Activated CD4-positive, alpha-beta T cell treated with anti-CD3 and anti-CD28 coated beads for 36 hours (primary cell): ENCODE measurements at regions of chr3 and their contacts with region 1.

Region 1: DNA sequence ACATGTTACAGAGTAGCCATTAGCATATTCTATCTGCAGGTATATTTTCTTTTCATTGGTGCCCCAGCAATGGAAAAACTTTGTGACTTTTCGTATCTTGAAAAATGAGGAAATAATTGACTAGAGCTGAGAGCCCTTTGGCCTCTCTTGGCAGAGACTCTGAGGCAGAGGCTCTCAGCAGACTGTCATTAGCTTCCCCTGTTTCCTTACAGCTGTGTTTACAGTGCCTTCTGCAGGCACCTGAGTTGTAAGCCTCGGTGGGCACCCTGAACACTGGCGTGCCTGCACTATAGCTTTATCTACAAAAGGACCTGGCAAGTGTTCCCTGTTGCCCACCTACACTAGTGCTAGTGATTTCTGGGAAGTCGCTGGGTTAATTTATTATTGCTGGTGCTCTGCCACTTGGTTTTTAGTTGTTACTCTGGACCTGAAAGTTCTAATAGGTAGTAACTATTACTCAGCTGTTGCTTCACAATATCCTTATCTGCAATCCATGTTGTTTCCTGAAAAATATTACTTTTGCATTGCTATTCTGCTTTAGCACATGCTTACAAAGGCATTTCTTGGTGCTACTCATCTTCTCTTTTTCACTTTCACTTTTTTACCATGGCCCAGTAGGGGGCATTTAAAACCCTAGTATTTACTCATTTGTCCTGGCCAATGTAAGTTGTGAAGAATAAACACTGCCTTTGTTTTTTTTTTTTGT is 7.8 kb upstream of the GPR171 start:
- DNase-seq: peak; percentile 20
- ATAC-seq: peak; percentile 38
- H3K4me3 Mint-ChIP-seq: peak overlapping the region; percentile 41
- H3K27ac Mint-ChIP-seq: peak overlapping the region; percentile 89
- H3K4me1 Mint-ChIP-seq: peaks cover 58% of the 10 kb centered on the region
- H3K27me3 Mint-ChIP-seq: no peaks in the 10 kb centered on the region

Region 2: DNA sequence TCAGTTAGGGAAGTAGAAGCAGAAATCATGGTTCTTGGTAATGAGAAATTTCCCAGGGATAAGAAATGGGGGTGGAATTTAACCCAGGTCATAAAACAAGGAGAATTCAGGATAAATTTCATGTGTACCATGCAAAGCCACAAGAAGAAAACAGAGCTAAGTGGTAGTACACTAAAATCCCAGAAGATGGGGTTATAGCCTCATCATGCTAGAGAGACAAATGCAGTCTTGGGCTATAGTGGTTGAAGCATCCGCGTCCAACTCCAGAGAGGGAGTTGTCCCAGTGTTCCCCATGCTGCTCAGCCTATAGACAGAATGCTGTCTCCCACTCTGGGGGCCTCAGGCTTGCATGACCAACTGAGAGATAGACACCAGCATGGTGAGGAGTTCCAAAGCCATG is 202.1 kb before region 1 on chr3:
- CTCF ChIA-PET with region 1: no interaction called
- POLR2A ChIA-PET with region 1: no interaction called
- intact Hi-C with region 1: no loop called
- DNase-seq: no peak
- ATAC-seq: no peak
- H3K4me3 Mint-ChIP-seq: no peak overlapping the region
- H3K27ac Mint-ChIP-seq: no peak overlapping the region
- H3K4me1 Mint-ChIP-seq: no peaks in the 10 kb centered on the region
- H3K27me3 Mint-ChIP-seq: peaks cover 2% of the 10 kb centered on the region

Region 3: GRCh38 chr3:151236736-151237135 is 25.9 kb after region 1 on chr3:
- CTCF ChIA-PET with region 1: no interaction called
- POLR2A ChIA-PET with region 1: interaction called, 10 read pairs
- intact Hi-C with region 1: no loop called
- DNase-seq: no peak
- ATAC-seq: no peak
- H3K4me3 Mint-ChIP-seq: no peak overlapping the region
- H3K27ac Mint-ChIP-seq: no peak overlapping the region
- H3K4me1 Mint-ChIP-seq: no peaks in the 10 kb centered on the region
- H3K27me3 Mint-ChIP-seq: no peaks in the 10 kb centered on the region